H1 (cell line): ENCODE measurements at regions of chr1 and their contacts with region 1.

Region 1: GRCh38 chr1:56578963-56579875 is at the start of gene PLPP3:
- DNase-seq: peak; percentile 70 to 80
- H3K4me3 ChIP-seq: peak within 1 kb of the TSS; percentile 79 to 98 (median 93)
- H3K27ac ChIP-seq: peak within 1 kb of the TSS; percentile 66; the same call in 1 of the 2 replicates
- H3K4me1 ChIP-seq: peaks cover 3 to 12% (median 6%) of the 10 kb centered on the region in 4 experiments; a peak in 6 of 7 replicates
- H3K27me3 ChIP-seq: no peaks in the 10 kb centered on the region
- CTCF ChIP-seq: peak; percentile 22 to 31 (median 23)
- EP300 ChIP-seq: no peak
- POLR2A ChIP-seq: peak; percentile 61 to 96
- RAD21 ChIP-seq: peak; percentile 41 to 44
- total RNA-seq, gene PLPP3: 30.6 and 33.2 TPM in 2 replicates

Region 2: GRCh38 chr1:56434740-56435139 is 144.5 kb before region 1 on chr1:
- CTCF ChIA-PET with region 1: interaction called, 19 read pairs
- POLR2A ChIA-PET with region 1: interaction called, 7 read pairs
- DNase-seq: no peak
- H3K4me3 ChIP-seq: no peak overlapping the region
- H3K27ac ChIP-seq: no peak overlapping the region
- H3K4me1 ChIP-seq: peaks cover 15 to 28% (median 23%) of the 10 kb centered on the region in 4 experiments
- H3K27me3 ChIP-seq: no peaks in the 10 kb centered on the region; a peak in 2 of 7 replicates
- CTCF ChIP-seq: peak; percentile 1 to 58 (median 50); a peak in 2 of 4 replicates
- EP300 ChIP-seq: no peak
- POLR2A ChIP-seq: no peak
- RAD21 ChIP-seq: peak; percentile 32 to 48; a peak in 3 of 4 replicates

Region 3: DNA sequence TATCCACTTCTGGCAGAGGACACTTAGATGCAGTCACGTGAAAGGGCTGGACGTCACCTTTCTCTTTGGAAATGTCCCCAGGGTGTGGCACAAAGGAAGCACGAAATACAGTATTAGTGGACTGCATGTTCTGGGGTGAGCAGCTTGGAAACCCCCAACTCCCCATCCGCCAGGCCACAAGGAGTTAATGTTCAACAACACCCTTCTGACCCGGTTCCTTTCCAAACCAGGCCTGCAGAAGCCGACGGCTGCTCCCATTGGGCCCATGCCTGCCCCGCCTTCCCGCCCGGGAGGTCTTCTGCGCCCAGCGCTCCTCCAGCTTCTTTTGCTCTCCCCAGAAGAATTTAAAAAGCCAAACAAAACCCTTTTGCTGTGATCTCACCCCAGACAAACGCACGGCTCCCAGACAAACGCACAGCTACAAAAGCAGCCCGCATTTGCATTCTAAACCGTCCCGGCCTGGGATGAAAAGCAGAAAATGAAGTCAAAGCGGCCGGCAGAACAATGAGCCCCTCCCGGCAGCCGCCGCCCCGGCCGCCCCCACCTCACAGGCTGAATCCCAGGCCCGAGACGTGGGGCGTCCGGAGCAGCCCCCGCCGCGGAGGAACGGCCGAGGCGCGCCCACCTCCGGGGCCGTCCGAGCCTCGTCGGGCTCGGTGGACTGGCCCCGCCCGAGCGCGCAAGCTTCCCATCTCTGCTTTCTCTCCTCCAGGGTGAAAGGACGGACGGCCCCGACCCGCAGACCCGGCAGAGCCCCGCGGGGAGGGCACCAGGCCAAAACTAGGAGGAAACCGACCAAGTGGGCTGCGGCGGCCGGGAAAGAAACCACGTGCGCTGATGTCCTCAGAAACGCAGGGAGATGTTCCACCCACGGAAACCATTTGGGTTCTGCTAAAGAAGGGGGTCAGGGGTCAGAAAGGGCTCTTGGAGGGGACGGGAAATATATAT is 101.8 kb before region 1 on chr1:
- CTCF ChIA-PET with region 1: interaction called, 7 read pairs
- POLR2A ChIA-PET with region 1: interaction called, 11 read pairs
- DNase-seq: peak; percentile 54 to 67
- H3K4me3 ChIP-seq: peak overlapping the region; percentile 30 to 66 (median 48)
- H3K27ac ChIP-seq: no peak overlapping the region
- H3K4me1 ChIP-seq: peaks cover 2 to 6% (median 3%) of the 10 kb centered on the region in 4 experiments
- H3K27me3 ChIP-seq: peaks cover 0 to 4% (median 0%) of the 10 kb centered on the region in 4 experiments; a peak in 2 of 7 replicates
- CTCF ChIP-seq: no peak
- EP300 ChIP-seq: no peak; a peak in 1 of 3 replicates
- POLR2A ChIP-seq: no peak
- RAD21 ChIP-seq: no peak; a peak in 1 of 4 replicates

Region 4: DNA sequence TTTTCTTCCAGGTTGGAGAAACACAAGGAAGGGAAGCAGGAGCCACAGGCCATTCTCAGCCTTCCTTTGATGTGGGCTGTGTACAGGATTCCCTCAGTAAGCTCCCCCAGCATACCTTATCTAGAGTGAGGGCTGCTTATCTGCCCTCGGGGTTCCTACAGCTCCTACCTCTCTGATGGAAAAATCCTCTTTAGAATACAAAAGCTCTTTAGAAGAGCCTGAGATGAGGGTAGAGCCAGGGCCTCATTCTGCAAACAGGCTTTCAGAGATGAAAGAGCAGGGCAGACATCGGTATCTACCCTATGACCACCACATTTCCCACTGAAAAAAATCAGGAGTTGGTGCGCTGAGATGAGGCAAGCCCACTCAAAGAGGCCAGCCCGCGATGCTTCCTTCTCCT is 84.9 kb before region 1 on chr1:
- CTCF ChIA-PET with region 1: interaction called, 10 read pairs
- POLR2A ChIA-PET with region 1: interaction called, 3 read pairs
- DNase-seq: no peak
- H3K4me3 ChIP-seq: no peak overlapping the region
- H3K27ac ChIP-seq: no peak overlapping the region
- H3K4me1 ChIP-seq: peaks cover 0 to 6% (median 4%) of the 10 kb centered on the region in 4 experiments; a peak in 5 of 7 replicates
- H3K27me3 ChIP-seq: no peaks in the 10 kb centered on the region
- CTCF ChIP-seq: no peak
- EP300 ChIP-seq: no peak
- POLR2A ChIP-seq: no peak
- RAD21 ChIP-seq: no peak

Region 5: GRCh38 chr1:56533621-56534020 is 45.6 kb before region 1 on chr1:
- CTCF ChIA-PET with region 1: interaction called, 13 read pairs
- POLR2A ChIA-PET with region 1: interaction called, 30 read pairs
- DNase-seq: no peak
- H3K4me3 ChIP-seq: no peak overlapping the region
- H3K27ac ChIP-seq: 0 out of 2 replicates have a peak overlapping the region, but pooled peaks have one; percentile 6
- H3K4me1 ChIP-seq: peaks cover 12 to 60% (median 53%) of the 10 kb centered on the region in 4 experiments
- H3K27me3 ChIP-seq: no peaks in the 10 kb centered on the region
- CTCF ChIP-seq: no peak
- EP300 ChIP-seq: no peak
- POLR2A ChIP-seq: no peak
- RAD21 ChIP-seq: no peak

Region 6: DNA sequence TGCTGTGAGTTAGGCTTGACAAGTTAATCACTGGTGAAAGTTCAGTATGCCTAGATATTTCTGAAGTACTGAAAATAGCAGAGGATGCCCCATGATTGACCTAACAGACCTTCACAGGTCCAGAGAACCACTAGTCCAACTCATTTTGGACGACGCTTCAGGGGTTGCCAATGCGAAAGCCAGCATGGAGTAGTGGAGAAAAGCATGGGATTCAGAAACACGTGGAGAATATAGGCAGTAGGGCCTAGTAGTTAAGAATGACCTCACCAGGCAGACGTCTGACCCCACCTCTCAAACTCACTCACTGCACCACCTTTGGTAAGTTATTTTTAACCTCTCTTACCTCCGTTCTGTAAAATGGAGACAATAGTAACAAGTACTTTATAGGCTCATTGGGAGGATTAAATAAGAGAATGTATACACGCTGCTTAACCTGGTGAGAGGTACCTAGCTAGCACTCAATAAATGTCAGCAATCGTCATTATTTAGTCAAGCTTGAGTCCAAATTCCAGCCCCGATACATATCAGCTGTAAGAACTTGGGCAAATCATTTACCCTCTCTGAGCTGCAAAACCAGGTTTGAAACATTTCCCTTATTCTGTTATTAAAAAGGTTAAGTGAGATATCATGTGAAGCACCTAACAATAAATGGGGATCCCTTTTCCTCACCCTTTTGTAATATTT is 13.0 kb before region 1 on chr1:
- CTCF ChIA-PET with region 1: interaction called, 31 read pairs
- POLR2A ChIA-PET with region 1: interaction called, 18 read pairs
- DNase-seq: no peak
- H3K4me3 ChIP-seq: 0 out of 8 replicates have a peak overlapping the region, but pooled peaks of 1 of the 4 experiments have one; percentile 9
- H3K27ac ChIP-seq: peak overlapping the region; percentile 17; the same call in 1 of the 2 replicates
- H3K4me1 ChIP-seq: peaks cover 4 to 44% (median 37%) of the 10 kb centered on the region in 4 experiments; a peak in 6 of 7 replicates
- H3K27me3 ChIP-seq: no peaks in the 10 kb centered on the region
- CTCF ChIP-seq: no peak
- EP300 ChIP-seq: no peak
- POLR2A ChIP-seq: no peak
- RAD21 ChIP-seq: no peak